ENCODE measurements at regions of chr2 and their contacts with region 1.

Region 1: GRCh38 chr2:68196120-68196716 is 38.5 kb downstream of the PNO1 start:
- DNase-seq: peak; percentile 64
- ATAC-seq: peak; percentile 48
- H3K4me3 Mint-ChIP-seq: no peak overlapping the region
- H3K27ac Mint-ChIP-seq: no peak overlapping the region
- H3K4me1 Mint-ChIP-seq: peaks cover 35% of the 10 kb centered on the region
- H3K27me3 Mint-ChIP-seq: no peaks in the 10 kb centered on the region

Region 2: GRCh38 chr2:68178954-68179627 is 17.1 kb before region 1 on chr2:
- CTCF ChIA-PET with region 1: interaction called, 12 read pairs
- DNase-seq: no peak
- ATAC-seq: no peak
- H3K4me3 Mint-ChIP-seq: no peak overlapping the region
- H3K27ac Mint-ChIP-seq: no peak overlapping the region
- H3K4me1 Mint-ChIP-seq: peaks cover 3% of the 10 kb centered on the region
- H3K27me3 Mint-ChIP-seq: no peaks in the 10 kb centered on the region

Region 3: GRCh38 chr2:68185541-68186164 is 10.6 kb before region 1 on chr2:
- CTCF ChIA-PET with region 1: interaction called, 12 read pairs
- DNase-seq: peak; percentile 60
- ATAC-seq: peak; percentile 68
- H3K4me3 Mint-ChIP-seq: no peak overlapping the region
- H3K27ac Mint-ChIP-seq: peak overlapping the region; percentile 43
- H3K4me1 Mint-ChIP-seq: peaks cover 24% of the 10 kb centered on the region
- H3K27me3 Mint-ChIP-seq: no peaks in the 10 kb centered on the region

Region 4: DNA sequence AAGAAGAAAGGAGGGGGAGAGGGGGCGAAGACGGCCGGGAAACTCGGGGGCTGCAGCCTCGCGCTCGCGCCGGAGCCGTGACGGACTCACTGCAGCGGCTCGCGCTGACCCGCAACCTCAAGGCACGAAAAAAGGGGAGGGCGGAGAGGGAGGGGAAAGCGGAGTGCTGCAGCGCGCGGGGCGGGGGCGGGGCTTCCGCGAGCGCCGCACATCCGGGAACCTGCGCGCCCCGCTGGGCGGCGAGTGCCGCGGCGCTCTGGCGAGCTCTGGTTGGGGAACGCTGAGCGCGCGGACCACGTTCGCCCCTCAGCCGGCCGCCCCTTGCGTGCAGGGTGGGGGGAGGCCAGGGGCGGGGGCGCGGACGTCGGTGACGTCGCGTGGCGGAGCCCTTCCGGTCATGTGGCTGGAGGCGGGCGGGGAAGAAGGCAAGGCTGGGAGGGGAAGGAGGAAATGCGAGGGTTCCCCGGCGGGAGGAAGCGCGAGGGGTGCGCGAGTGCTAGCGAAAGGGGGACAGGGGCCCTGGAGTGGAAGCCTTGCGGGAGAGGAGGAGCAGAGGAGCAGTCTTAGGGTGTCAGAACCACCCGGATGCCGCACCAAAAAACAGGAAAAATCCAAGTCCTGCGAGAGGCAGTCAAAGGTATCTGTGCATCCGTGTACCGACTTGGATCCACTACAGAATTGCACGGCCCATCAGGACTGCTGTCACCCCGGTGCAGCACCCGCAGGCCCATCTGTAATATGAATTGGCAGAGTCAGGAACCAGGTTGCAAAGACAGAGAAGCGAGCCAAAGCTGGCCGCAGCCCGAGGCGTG is 56.4 kb after region 1 on chr2 and contains the start of gene PPP3R1:
- CTCF ChIA-PET with region 1: interaction called, 11 read pairs
- DNase-seq: peak; percentile 97
- ATAC-seq: peak; percentile 86
- H3K4me3 Mint-ChIP-seq: peak within 1 kb of the TSS; percentile 99
- H3K27ac Mint-ChIP-seq: peak within 1 kb of the TSS; percentile 99
- H3K4me1 Mint-ChIP-seq: peaks cover 36% of the 10 kb centered on the region
- H3K27me3 Mint-ChIP-seq: no peaks in the 10 kb centered on the region
- total RNA-seq, gene PPP3R1: 58.6 to 86.4 TPM

Region 5: GRCh38 chr2:68272246-68272994 is 76.2 kb after region 1 on chr2:
- CTCF ChIA-PET with region 1: interaction called, 10 read pairs
- DNase-seq: no peak
- ATAC-seq: no peak
- H3K4me3 Mint-ChIP-seq: no peak overlapping the region
- H3K27ac Mint-ChIP-seq: no peak overlapping the region
- H3K4me1 Mint-ChIP-seq: no peaks in the 10 kb centered on the region
- H3K27me3 Mint-ChIP-seq: peaks cover 35% of the 10 kb centered on the region

Region 6: DNA sequence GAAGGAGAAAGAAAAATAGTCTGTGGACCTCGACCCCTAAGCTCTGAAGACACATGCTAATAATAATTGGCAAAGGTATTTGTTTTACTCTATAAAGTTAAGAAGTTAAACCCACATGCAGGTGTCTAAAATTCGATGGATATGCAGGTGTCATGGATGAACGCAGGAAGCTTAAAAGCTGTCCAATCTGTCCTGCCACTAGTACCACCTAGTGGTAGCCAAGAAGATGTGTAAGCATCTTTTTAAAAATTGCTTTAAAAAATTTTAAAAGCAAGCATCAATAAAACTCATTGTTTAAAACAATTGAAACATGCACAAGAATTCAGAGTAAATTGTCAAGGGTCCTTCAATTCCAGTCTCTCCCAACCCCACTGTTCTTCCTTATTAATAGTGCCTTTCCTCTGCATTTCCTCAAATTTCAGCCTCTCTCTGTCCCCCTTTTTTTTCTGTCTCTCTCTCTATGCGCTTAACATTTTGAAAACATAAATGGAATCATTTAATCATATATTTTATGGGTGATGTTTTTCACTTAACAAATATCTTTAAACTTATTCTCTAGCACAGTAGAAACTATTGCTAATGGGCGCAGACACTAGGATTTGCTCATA is 86.7 kb after region 1 on chr2:
- CTCF ChIA-PET with region 1: interaction called, 28 read pairs
- DNase-seq: no peak
- ATAC-seq: peak; percentile 58
- H3K4me3 Mint-ChIP-seq: no peak overlapping the region
- H3K27ac Mint-ChIP-seq: no peak overlapping the region
- H3K4me1 Mint-ChIP-seq: peaks cover 9% of the 10 kb centered on the region
- H3K27me3 Mint-ChIP-seq: peaks cover 43% of the 10 kb centered on the region

Measured in activated CD8-positive, alpha-beta memory T cell treated with anti-CD3 and anti-CD28 coated beads, Interleukin-2, amount 10 ng/mL, durations not matched to agents 7 days and 5 days (primary cell).